GM18951 (cell line): ENCODE measurements at regions of chr12 and their contacts with region 1.

Region 1: DNA sequence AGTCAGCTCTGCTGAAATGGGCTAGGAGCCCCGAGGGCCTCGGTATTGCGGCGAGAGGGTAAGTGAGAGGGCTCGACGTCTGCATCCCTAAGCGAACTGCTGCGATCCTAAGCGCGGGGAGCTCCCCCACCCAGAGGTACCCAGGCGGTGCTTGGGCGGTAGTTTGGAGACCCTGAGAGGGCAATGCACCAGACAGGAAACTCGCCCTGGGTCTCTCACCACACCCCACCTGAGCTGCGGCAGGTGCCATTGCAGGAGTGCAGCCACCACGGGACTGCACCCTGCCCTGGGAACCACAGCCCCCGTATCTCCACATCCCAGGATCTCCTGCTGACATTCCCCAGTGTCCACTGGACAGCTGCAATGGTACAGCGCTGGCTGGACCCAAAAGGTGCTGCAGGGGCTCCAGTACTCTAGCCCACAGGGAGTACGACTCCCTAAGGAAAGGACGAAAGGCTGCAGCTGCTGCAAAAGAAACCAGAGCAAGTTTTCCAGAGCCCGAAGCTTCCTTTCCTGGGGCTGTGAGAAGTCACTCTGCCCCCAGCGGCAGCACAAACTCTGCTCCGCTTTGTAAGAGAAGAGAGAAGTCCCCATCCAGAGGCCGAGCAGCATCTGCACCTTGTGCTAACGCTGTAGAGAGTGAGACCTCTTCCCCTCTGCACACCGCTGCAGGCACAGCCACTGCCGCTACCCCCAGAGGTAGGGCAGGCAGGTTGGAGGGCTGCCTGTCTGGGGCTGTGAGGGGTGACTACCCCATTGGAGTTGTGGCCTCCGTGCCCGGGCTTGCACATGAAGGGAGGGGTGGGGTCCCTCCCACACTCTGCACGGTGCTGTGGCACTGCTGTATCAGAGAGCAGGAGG is 31.1 kb upstream of the MON2 start:
- POLR2A ChIP-seq: no peak

Region 2: DNA sequence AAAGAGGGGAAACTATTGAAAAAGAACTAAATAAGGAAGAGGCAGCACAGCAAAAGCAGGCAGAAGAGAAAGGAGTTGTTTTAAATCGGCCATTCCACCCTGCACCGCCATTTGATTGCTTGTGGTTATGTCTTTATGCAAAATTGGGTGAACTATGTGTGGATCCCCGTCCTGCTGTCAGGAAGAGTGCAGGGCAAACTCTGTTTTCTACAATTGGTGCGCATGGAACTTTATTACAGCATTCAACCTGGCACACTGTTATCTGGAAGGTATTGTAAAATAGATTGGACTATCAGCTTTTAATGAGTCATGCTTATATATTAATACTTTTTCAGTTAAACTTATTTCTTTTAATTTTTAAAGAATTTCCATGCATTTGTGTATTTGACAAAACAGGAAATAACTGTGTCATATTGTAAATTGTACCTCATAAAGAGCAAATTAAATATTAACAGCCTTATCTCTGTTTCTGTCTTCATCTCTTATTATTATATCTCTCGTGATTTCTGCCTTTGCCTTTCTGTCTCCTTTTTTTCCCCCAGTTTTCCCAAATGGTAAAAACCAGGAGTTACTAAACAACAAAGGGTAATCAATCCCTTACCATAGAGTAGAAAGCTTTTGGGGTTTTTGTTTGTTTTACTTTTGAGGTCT is 117.5 kb after region 1 on chr12:
- in situ Hi-C with region 1: no loop called
- POLR2A ChIP-seq: no peak

Region 3: DNA sequence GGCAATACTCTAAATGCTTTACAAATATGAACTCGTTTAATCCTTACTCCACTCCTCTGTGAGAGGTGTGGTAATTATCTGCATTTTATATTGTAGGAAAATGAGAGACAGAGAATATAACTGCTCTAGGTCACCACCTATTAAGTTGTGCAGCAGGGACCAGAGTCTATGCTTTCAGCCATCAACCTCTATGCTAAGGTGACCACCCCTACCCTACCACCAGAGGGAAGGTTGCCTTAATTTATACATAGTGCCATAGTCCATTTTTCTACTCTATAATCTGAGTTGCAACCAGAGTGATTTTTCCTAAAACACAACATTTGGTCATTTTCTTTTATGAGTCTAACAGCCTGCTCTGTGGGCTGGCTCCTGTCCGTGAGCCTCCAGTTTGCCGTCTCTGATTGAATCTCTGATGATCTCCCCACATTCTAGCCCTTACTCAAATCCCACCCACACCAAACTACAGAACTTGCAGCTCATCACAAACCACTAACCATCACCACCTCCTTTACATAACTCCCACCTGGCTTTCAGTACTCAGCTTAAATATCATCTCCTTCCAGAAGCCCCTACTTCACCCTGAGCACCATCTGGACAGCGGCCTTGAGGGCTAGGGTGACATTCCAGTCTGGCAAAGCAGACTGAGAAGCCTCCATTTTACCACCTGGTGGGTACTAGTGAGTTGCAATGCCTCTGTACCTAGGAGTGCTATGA is 372.8 kb after region 1 on chr12:
- in situ Hi-C with region 1: loop called (anchors 5 kb)
- POLR2A ChIP-seq: no peak

Region 4: DNA sequence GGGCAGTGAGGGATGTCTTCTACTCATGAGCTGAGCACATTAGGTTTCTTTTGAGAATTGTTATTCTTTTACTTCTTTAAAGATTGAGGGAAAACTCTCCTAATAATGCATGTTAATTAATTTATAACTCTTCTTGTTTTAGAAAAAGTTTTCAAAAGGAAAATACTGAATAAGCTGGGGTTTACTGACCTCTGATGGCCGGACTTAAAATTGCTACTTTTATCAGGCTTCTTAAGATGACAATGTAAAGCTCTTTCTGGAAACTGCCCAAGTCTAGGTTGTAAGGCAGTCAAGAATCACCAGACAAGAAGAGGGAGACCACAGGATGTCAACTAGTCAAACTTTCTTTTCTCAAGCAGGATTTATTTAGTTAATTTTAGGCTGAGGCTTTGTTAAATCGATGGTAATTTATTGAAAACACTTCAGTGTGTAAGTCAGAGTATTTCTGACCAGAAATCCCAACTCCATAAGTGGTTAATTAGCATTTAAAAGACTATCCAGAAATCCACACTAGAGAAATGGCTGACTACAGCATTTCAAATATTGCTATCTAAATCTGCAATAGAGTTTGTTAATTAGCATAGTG is 633.4 kb after region 1 on chr12:
- in situ Hi-C with region 1: no loop called
- POLR2A ChIP-seq: no peak